WTC11 (cell line): ENCODE measurements at regions of chr22 and their contacts with region 1.

Region 1: GRCh38 chr22:37953437-37954179 is at the starts of genes C22orf23 and POLR2F:
- DNase-seq: peak; percentile 96
- ATAC-seq: peak; percentile 86
- H3K4me3 Mint-ChIP-seq: peak within 1 kb of the TSS; percentile 95
- H3K27ac Mint-ChIP-seq: peak within 1 kb of the TSS; percentile 95
- H3K4me1 Mint-ChIP-seq: peaks cover 24% of the 10 kb centered on the region
- H3K27me3 Mint-ChIP-seq: peaks cover 16% of the 10 kb centered on the region
- CTCF ChIP-seq: no peak
- total RNA-seq, gene C22orf23: 0.16 to 0.96 TPM (median 0.72 TPM) in 3 replicates
- total RNA-seq, gene POLR2F: 128 to 138 TPM (median 132 TPM) in 3 replicates

Region 2: DNA sequence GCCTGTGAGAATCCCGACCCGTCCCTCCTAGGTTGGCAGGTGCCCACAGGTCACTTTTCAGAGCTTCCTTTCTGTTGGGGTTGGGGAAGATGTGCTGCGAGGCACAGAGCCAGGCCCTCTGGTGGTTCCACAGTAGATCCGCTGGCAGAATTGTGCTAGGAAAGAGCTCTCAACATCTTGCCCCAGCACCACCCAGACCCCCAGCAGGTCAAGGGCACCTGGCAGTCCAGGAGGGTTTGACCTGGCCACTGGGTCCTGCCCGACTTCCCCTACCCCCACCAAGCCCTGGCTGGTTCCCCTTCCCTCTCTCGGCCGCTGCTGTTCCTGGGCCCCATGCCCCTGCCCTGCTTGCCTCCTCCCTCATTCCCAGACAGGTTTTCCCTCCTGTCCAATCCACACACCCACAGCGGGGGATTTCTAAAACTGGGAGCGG is 172.1 kb before region 1 on chr22:
- CTCF ChIA-PET with region 1: no interaction called
- POLR2A ChIA-PET with region 1: no interaction called
- DNase-seq: peak; percentile 38
- ATAC-seq: peak; percentile 71
- H3K4me3 Mint-ChIP-seq: no peak overlapping the region
- H3K27ac Mint-ChIP-seq: no peak overlapping the region
- H3K4me1 Mint-ChIP-seq: peaks cover 12% of the 10 kb centered on the region; the same call in 1 of the 2 replicates
- H3K27me3 Mint-ChIP-seq: peaks cover 59% of the 10 kb centered on the region
- CTCF ChIP-seq: no peak

Region 3: GRCh38 chr22:37965940-37966664 is 12.5 kb after region 1 on chr22:
- CTCF ChIA-PET with region 1: interaction called, 16 read pairs
- POLR2A ChIA-PET with region 1: no interaction called
- DNase-seq: no peak
- ATAC-seq: no peak
- H3K4me3 Mint-ChIP-seq: no peak overlapping the region
- H3K27ac Mint-ChIP-seq: no peak overlapping the region; the same call in 1 of the 2 replicates
- H3K4me1 Mint-ChIP-seq: peaks cover 10% of the 10 kb centered on the region
- H3K27me3 Mint-ChIP-seq: no peaks in the 10 kb centered on the region
- CTCF ChIP-seq: no peak

Region 4: GRCh38 chr22:38069372-38070249 is 116.0 kb after region 1 on chr22:
- CTCF ChIA-PET with region 1: no interaction called
- POLR2A ChIA-PET with region 1: no interaction called
- DNase-seq: peak; percentile 58
- ATAC-seq: peak; percentile 66
- H3K4me3 Mint-ChIP-seq: no peak overlapping the region
- H3K27ac Mint-ChIP-seq: peak overlapping the region; percentile 45; the same call in 1 of the 2 replicates
- H3K4me1 Mint-ChIP-seq: peaks cover 2% of the 10 kb centered on the region; the same call in 1 of the 2 replicates
- H3K27me3 Mint-ChIP-seq: no peaks in the 10 kb centered on the region
- CTCF ChIP-seq: peak; percentile 25; the same call in 1 of the 2 replicates